Activated CD4-positive, alpha-beta T cell treated with anti-CD3 and anti-CD28 coated beads for 36 hours (primary cell): ENCODE measurements at regions of chr13 and their contacts with region 1.

Region 1: GRCh38 chr13:25306671-25307464 is 5.4 kb downstream of the NUP58 start:
- DNase-seq: no peak
- ATAC-seq: no peak
- H3K4me3 Mint-ChIP-seq: no peak overlapping the region
- H3K27ac Mint-ChIP-seq: no peak overlapping the region
- H3K4me1 Mint-ChIP-seq: peaks cover 35% of the 10 kb centered on the region
- H3K27me3 Mint-ChIP-seq: no peaks in the 10 kb centered on the region

Region 2: GRCh38 chr13:24709186-24709913 is 597.5 kb before region 1 on chr13:
- CTCF ChIA-PET with region 1: no interaction called
- POLR2A ChIA-PET with region 1: no interaction called
- intact Hi-C with region 1: no loop called
- DNase-seq: peak; percentile 84
- ATAC-seq: peak; percentile 98
- H3K4me3 Mint-ChIP-seq: peak overlapping the region; percentile 10
- H3K27ac Mint-ChIP-seq: peak overlapping the region; percentile 75
- H3K4me1 Mint-ChIP-seq: peaks cover 25% of the 10 kb centered on the region
- H3K27me3 Mint-ChIP-seq: peaks cover 3% of the 10 kb centered on the region

Region 3: DNA sequence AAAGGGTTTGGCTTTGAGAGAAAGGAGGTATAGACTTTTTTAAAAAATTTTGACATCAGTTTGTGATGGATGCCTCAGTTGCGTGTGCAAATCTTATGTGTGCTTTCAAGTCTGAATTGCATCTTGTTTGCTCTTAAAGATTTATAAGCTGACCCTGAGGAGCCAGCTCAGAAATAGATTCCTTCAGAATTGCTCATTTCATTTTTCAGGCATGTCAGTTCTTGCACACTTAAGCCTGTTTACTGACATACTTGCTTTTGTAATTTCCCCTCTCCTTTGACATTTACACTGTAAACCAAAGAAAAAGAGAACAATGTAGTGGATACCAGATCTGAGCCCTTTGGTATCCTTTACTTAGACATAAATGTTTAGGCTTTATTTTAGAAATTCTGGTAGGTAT is 455.3 kb before region 1 on chr13:
- CTCF ChIA-PET with region 1: no interaction called
- POLR2A ChIA-PET with region 1: no interaction called
- intact Hi-C with region 1: no loop called
- DNase-seq: no peak
- ATAC-seq: no peak
- H3K4me3 Mint-ChIP-seq: no peak overlapping the region
- H3K27ac Mint-ChIP-seq: no peak overlapping the region
- H3K4me1 Mint-ChIP-seq: no peaks in the 10 kb centered on the region
- H3K27me3 Mint-ChIP-seq: peaks cover 17% of the 10 kb centered on the region

Region 4: DNA sequence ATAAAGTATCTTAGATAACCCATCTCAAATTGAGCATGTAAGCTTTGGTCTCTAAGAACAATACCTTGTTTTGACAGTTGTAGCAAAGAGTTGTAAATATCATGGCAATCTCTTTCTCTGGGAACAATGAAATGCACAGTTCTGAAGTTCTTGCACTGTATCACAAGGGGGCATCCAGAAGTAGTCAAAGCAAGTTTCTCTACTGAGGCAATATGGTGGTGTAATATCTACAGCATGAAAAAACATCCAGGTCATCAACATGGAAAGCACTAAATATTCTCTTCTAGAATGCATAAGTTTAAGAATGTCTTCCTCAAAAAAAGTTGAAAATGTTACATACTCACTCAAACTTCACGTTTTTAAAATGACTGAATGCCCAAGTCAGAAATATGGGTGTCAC is 39.2 kb before region 1 on chr13:
- CTCF ChIA-PET with region 1: interaction called, 3 read pairs
- POLR2A ChIA-PET with region 1: interaction called, 7 read pairs
- intact Hi-C with region 1: loop called in 1 of 2 experiments (anchors 5 kb)
- DNase-seq: no peak
- ATAC-seq: peak; percentile 84
- H3K4me3 Mint-ChIP-seq: no peak overlapping the region
- H3K27ac Mint-ChIP-seq: no peak overlapping the region
- H3K4me1 Mint-ChIP-seq: no peaks in the 10 kb centered on the region
- H3K27me3 Mint-ChIP-seq: no peaks in the 10 kb centered on the region

Region 5: DNA sequence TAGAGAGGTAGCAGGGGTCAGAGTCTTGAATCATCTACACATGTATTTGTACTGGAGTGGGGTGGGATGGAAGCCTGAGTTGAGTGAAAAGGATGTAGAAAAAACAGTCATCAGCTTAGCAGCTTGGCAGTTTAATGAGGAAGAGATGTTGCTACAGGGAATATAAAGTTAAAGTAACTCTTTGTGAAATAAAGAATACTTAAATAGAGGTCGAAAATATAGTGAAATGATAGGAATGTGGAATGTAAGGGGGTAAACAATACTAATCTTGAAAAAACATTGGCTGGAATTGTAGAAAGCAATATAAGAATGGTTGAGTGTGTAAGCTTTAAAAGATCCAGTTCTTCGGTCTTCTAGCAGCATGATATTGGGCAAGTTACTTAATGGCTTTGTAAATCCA is 17.2 kb after region 1 on chr13:
- CTCF ChIA-PET with region 1: interaction called, 3 read pairs
- POLR2A ChIA-PET with region 1: interaction called, 3 read pairs
- intact Hi-C with region 1: loop called in 1 of 2 experiments (anchors 2 kb)
- DNase-seq: no peak
- ATAC-seq: no peak
- H3K4me3 Mint-ChIP-seq: no peak overlapping the region
- H3K27ac Mint-ChIP-seq: peak overlapping the region; percentile 0
- H3K4me1 Mint-ChIP-seq: no peaks in the 10 kb centered on the region
- H3K27me3 Mint-ChIP-seq: no peaks in the 10 kb centered on the region

Region 6: GRCh38 chr13:27137759-27138158 is 1830.9 kb after region 1 on chr13:
- CTCF ChIA-PET with region 1: no interaction called
- POLR2A ChIA-PET with region 1: no interaction called
- intact Hi-C with region 1: no loop called
- DNase-seq: no peak
- ATAC-seq: no peak
- H3K4me3 Mint-ChIP-seq: no peak overlapping the region
- H3K27ac Mint-ChIP-seq: no peak overlapping the region
- H3K4me1 Mint-ChIP-seq: peaks cover 66% of the 10 kb centered on the region
- H3K27me3 Mint-ChIP-seq: no peaks in the 10 kb centered on the region